Head of caudate nucleus (tissue), 42 donors: ENCODE measurements at regions of chr13 and their contacts with region 1.

Region 1: DNA sequence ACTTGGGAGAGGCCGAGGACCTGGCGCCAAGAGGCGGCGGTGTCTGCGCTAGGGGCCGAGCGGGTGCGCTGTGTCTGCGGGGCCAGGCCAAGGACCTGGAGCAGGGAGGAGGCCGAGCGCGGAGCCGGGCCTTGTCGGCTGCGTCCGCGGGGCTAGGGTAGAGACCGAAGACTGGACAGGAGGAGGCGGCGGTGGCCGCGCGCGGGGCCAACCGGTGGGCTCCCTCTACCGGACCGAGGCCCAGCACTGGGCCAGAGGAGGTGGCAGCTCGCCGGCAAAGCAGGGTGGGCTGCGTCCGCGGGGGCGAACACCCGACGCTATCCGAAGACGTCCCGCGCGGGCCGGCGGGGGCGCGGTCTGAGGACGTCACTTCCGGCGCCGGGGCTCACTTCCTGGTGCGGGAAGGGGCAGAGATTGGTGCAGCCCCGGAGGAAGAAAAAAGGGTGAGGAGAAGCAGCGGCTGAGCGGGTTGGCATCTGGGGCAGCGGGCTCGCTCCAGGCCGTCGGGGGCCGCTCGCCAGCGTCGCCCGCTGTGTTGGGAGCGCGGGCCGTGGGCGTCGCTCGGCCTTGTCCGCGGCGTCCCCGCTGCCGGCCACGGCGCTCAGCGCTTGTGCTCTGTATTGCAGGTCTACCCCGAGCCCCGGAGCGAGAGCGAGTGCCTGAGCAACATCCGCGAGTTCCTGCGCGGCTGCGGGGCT is 38.3 kb downstream of the ARHGEF7 start:
- DNase-seq: peak; percentile 85 to 98 (median 96)

Region 2: GRCh38 chr13:111219950-111220349 is 66.5 kb after region 1 on chr13:
- intact Hi-C with region 1: loop called (anchors 5 kb)
- DNase-seq: no peak